Activated B cell treated with CpG ODN at 0.5 μM for 24 hours (primary cell): ENCODE measurements at regions of chr10 and their contacts with region 1.

Region 1: GRCh38 chr10:7687228-7687907 is 15.7 kb upstream of the ITIH2 start:
- DNase-seq: peak; percentile 43
- ATAC-seq: peak; percentile 89
- H3K4me3 Mint-ChIP-seq: no peak overlapping the region
- H3K27ac Mint-ChIP-seq: no peak overlapping the region
- H3K4me1 Mint-ChIP-seq: peaks cover 4% of the 10 kb centered on the region
- H3K27me3 Mint-ChIP-seq: peaks cover 23% of the 10 kb centered on the region
- CTCF ChIP-seq: peak; percentile 35

Region 2: DNA sequence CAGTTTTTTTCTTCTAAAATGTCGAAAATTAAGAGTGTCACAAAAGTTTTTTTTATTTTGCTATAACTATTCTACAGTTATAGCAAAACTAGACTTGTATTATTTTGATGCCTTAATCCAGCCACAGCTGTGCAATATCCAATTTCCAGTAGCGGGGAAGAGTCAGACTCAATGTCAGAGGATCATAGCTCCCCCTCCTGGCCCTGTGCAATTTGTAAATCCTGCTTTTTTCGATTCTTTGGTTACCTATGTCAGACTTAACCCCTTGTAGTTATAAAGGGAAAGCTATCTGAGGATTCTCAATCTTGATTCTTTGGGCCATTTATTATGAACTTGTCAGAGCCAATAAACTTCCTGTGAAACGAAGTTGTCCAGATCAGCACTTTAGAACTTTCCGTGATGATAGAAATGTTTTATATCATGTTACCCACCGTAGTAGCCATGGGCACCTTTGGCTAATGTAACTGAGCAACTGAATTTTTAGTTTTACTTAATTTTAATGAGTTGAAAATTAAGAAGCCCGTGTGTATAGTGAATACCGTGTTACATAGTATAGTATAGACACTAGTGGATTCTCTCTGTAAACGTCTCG is 1019.6 kb before region 1 on chr10:
- CTCF ChIA-PET with region 1: interaction called, 3 read pairs
- POLR2A ChIA-PET with region 1: no interaction called
- intact Hi-C with region 1: loop called (anchors 1 kb)
- DNase-seq: no peak
- ATAC-seq: no peak
- H3K4me3 Mint-ChIP-seq: no peak overlapping the region
- H3K27ac Mint-ChIP-seq: no peak overlapping the region
- H3K4me1 Mint-ChIP-seq: no peaks in the 10 kb centered on the region
- H3K27me3 Mint-ChIP-seq: peaks cover 8% of the 10 kb centered on the region
- CTCF ChIP-seq: no peak

Region 3: GRCh38 chr10:6920072-6921019 is 767.0 kb before region 1 on chr10:
- CTCF ChIA-PET with region 1: interaction called, 14 read pairs
- POLR2A ChIA-PET with region 1: no interaction called
- intact Hi-C with region 1: loop called (anchors 1 kb)
- DNase-seq: peak; percentile 49
- ATAC-seq: peak; percentile 93
- H3K4me3 Mint-ChIP-seq: no peak overlapping the region
- H3K27ac Mint-ChIP-seq: no peak overlapping the region
- H3K4me1 Mint-ChIP-seq: peaks cover 26% of the 10 kb centered on the region
- H3K27me3 Mint-ChIP-seq: no peaks in the 10 kb centered on the region
- CTCF ChIP-seq: peak; percentile 33

Region 4: DNA sequence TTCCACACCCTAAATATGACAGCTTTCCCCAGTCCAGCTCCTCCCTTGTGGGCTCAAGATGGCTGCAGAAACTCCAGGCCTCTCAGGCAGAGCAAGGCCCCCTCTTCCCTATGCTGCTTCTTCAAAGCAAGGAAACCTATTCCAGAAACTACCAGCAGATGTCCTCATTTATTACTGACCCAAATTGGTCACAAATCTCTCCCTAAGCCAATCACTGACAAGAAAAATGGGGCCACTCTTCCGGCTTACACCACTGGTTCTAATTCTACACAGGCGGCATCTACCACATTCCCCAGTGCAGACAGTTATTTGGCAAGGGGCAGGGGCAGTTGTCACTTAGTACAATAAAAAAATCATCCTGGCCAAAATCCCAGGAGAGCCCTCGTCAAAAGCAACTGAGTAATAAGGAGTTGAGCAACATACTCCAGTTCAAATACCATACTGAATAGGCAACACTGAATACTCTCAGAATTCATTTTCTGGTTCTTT is 426.9 kb before region 1 on chr10:
- CTCF ChIA-PET with region 1: interaction called, 9 read pairs
- POLR2A ChIA-PET with region 1: no interaction called
- intact Hi-C with region 1: loop called (anchors 1 kb)
- DNase-seq: no peak
- ATAC-seq: peak; percentile 81
- H3K4me3 Mint-ChIP-seq: no peak overlapping the region
- H3K27ac Mint-ChIP-seq: no peak overlapping the region
- H3K4me1 Mint-ChIP-seq: peaks cover 29% of the 10 kb centered on the region
- H3K27me3 Mint-ChIP-seq: no peaks in the 10 kb centered on the region
- CTCF ChIP-seq: peak; percentile 53

Region 5: DNA sequence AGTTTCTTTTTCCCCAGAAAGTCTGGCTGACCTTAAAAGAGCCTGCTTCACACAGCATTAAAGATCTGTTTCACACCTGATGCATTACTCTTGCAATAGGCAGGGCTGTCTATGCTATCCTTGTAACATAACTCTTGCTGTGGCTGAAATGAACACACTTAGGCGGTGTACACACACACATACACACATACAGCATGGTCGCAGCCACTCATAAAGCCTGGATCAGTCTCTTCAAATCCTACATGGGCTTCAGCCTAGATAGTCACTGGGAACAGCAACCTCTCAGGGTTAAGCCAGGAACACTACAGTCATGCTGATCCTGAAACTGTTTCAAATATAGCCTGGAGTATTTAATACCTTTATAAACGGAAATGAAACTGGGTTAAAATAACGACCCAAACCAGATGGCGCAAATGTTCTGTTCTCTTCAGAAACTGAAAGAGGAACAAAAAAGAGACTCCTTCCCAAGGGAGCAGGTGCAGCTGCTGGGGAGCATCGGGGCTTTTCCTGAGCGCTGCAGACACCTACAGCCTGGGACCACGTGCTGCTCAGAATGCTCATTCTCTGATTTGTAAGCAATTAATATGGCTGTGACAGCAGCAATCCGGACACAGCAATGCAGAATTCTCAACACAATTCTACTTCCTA is 215.5 kb before region 1 on chr10:
- CTCF ChIA-PET with region 1: no interaction called
- POLR2A ChIA-PET with region 1: no interaction called
- intact Hi-C with region 1: loop called (anchors 5 kb)
- DNase-seq: peak; percentile 59
- ATAC-seq: peak; percentile 89
- H3K4me3 Mint-ChIP-seq: peak overlapping the region; percentile 73
- H3K27ac Mint-ChIP-seq: peak overlapping the region; percentile 90
- H3K4me1 Mint-ChIP-seq: peaks cover 78% of the 10 kb centered on the region
- H3K27me3 Mint-ChIP-seq: no peaks in the 10 kb centered on the region
- CTCF ChIP-seq: no peak

Region 6: GRCh38 chr10:7697304-7697875 is 10.0 kb after region 1 on chr10:
- CTCF ChIA-PET with region 1: interaction called, 12 read pairs
- POLR2A ChIA-PET with region 1: no interaction called
- intact Hi-C with region 1: no loop called
- DNase-seq: no peak
- ATAC-seq: no peak
- H3K4me3 Mint-ChIP-seq: no peak overlapping the region
- H3K27ac Mint-ChIP-seq: no peak overlapping the region
- H3K4me1 Mint-ChIP-seq: no peaks in the 10 kb centered on the region
- H3K27me3 Mint-ChIP-seq: peaks cover 16% of the 10 kb centered on the region
- CTCF ChIP-seq: no peak

Region 7: GRCh38 chr10:7710446-7710845 is 23.1 kb after region 1 on chr10:
- CTCF ChIA-PET with region 1: no interaction called
- POLR2A ChIA-PET with region 1: no interaction called
- intact Hi-C with region 1: no loop called
- DNase-seq: no peak
- ATAC-seq: no peak
- H3K4me3 Mint-ChIP-seq: no peak overlapping the region
- H3K27ac Mint-ChIP-seq: no peak overlapping the region
- H3K4me1 Mint-ChIP-seq: no peaks in the 10 kb centered on the region
- H3K27me3 Mint-ChIP-seq: peaks cover 13% of the 10 kb centered on the region
- CTCF ChIP-seq: no peak

Region 8: GRCh38 chr10:7738536-7739407 is 51.4 kb after region 1 on chr10:
- CTCF ChIA-PET with region 1: no interaction called
- POLR2A ChIA-PET with region 1: no interaction called
- intact Hi-C with region 1: no loop called
- DNase-seq: no peak
- ATAC-seq: no peak
- H3K4me3 Mint-ChIP-seq: no peak overlapping the region
- H3K27ac Mint-ChIP-seq: no peak overlapping the region
- H3K4me1 Mint-ChIP-seq: no peaks in the 10 kb centered on the region
- H3K27me3 Mint-ChIP-seq: peaks cover 2% of the 10 kb centered on the region
- CTCF ChIP-seq: no peak

Region 9: DNA sequence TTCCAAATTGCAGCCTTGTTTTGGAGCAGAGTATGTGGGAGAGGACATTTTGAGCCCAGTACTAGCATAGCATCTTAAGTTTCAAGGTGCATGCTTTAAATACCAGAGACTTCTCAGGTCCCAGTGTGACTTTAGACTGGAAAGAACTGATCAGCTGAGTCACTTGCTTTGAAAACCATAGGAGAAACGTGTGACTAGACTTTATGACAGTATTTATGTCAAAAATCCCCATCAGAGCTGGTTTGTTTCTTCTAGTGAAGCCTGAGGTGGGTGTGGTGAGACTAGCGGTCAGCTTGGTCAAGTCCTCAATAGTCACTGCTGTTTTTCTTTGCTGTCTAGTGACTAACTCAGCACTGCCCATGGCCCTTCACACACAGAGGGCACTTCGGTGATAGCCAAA is 1091.3 kb after region 1 on chr10:
- CTCF ChIA-PET with region 1: no interaction called
- POLR2A ChIA-PET with region 1: no interaction called
- intact Hi-C with region 1: no loop called
- DNase-seq: no peak
- ATAC-seq: no peak
- H3K4me3 Mint-ChIP-seq: no peak overlapping the region
- H3K27ac Mint-ChIP-seq: no peak overlapping the region
- H3K4me1 Mint-ChIP-seq: no peaks in the 10 kb centered on the region
- H3K27me3 Mint-ChIP-seq: no peaks in the 10 kb centered on the region
- CTCF ChIP-seq: no peak